ENCODE measurements at regions of chr5 and their contacts with region 1.

Region 1: GRCh38 chr5:52787600-52788504 is at the starts of genes ITGA1 and PELO:
- DNase-seq: peak; percentile 88 to 94
- ATAC-seq: peak; percentile 94
- H3K4me3 ChIP-seq: peak within 1 kb of the TSS; percentile 86 to 93
- H3K27ac ChIP-seq: peak within 1 kb of the TSS; percentile 93 to 98
- H3K4me1 ChIP-seq: peaks cover 5 to 9% of the 10 kb centered on the region in 2 donors
- H3K27me3 ChIP-seq: no peaks in the 10 kb centered on the region
- total RNA-seq, gene ITGA1: 132 to 152 TPM
- total RNA-seq, gene PELO: 49.6 to 52.4 TPM

Region 2: GRCh38 chr5:52682492-52682891 is 105.4 kb before region 1 on chr5:
- intact Hi-C with region 1: no loop called
- DNase-seq: no peak
- ATAC-seq: no peak
- H3K4me3 ChIP-seq: no peak overlapping the region
- H3K27ac ChIP-seq: no peak overlapping the region
- H3K4me1 ChIP-seq: no peaks in the 10 kb centered on the region
- H3K27me3 ChIP-seq: no peaks in the 10 kb centered on the region

Region 3: DNA sequence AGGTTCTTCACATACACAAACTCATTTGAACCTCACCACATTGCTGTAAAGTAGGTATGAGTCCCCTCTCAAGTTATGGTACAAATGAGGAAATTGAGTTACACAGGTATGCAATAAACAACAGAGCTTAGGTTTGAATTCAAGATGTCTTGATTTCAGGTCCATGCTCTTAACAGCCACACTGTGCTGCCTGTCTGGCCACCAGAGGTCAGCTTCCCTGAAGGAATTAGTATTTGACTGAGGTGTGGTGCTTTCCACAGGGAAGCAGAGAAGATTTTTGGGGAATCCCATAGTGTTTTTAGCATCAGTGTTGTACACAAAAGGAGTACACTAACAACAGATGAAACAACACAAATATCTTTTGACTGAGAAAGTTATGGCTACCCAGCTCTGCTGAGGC is 94.6 kb before region 1 on chr5:
- intact Hi-C with region 1: loop called (anchors 1 to 5 kb)
- DNase-seq: peak in 1 of 2 donors; percentile 75
- ATAC-seq: peak; percentile 72
- H3K4me3 ChIP-seq: no peak overlapping the region
- H3K27ac ChIP-seq: no peak overlapping the region
- H3K4me1 ChIP-seq: peaks cover 0 to 11% of the 10 kb centered on the region in 2 donors
- H3K27me3 ChIP-seq: no peaks in the 10 kb centered on the region

Region 4: DNA sequence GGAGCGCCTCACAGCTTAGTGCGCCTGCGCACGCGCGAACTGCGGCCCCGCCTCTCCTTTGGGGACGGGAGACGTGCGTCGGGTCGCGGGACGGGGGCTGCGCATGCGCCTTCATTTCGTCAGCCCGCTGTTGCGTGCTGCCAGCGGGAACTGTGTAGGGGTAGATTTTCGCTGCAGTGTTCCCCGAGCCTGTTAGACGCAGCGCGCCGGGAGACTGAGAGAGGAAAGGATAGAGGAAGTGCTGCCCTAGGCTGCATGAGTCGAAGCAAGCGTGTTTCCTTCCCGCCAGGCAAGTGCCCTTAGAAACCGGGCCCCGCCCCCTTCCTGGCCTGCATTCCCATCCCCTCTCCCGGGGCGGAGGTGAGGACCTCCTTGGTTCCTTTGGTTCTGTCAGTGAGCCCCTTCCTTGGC is 12.1 kb after region 1 on chr5:
- intact Hi-C with region 1: no loop called
- DNase-seq: peak; percentile 97 to 99
- ATAC-seq: peak; percentile 96
- H3K4me3 ChIP-seq: peak overlapping the region; percentile 90
- H3K27ac ChIP-seq: peak overlapping the region; percentile 58 to 81
- H3K4me1 ChIP-seq: peaks cover 4 to 6% of the 10 kb centered on the region in 2 donors
- H3K27me3 ChIP-seq: no peaks in the 10 kb centered on the region

Region 5: GRCh38 chr5:52915176-52915875 is 127.5 kb after region 1 on chr5:
- intact Hi-C with region 1: loop called (anchors 1 to 5 kb)
- DNase-seq: no peak
- ATAC-seq: peak; percentile 92
- H3K4me3 ChIP-seq: no peak overlapping the region
- H3K27ac ChIP-seq: no peak overlapping the region
- H3K4me1 ChIP-seq: no peaks in the 10 kb centered on the region
- H3K27me3 ChIP-seq: no peaks in the 10 kb centered on the region

Region 6: GRCh38 chr5:53095931-53096525 is 308.2 kb after region 1 on chr5:
- intact Hi-C with region 1: loop called (anchors 5 to 10 kb)
- DNase-seq: peak in 1 of 2 donors; percentile 56
- ATAC-seq: peak; percentile 85
- H3K4me3 ChIP-seq: no peak overlapping the region
- H3K27ac ChIP-seq: no peak overlapping the region
- H3K4me1 ChIP-seq: peaks cover 0 to 3% of the 10 kb centered on the region in 2 donors
- H3K27me3 ChIP-seq: no peaks in the 10 kb centered on the region

Measured in aorta (tissue), 5 donors.